PC-9 (cell line): ENCODE measurements at regions of chr9 and their contacts with region 1.

Region 1: GRCh38 chr9:115353681-115354080 is 235.7 kb upstream of the TNC start:
- DNase-seq: no peak
- H3K4me3 ChIP-seq: no peak overlapping the region
- H3K27ac ChIP-seq: no peak overlapping the region
- H3K4me1 ChIP-seq: peaks cover 15% of the 10 kb centered on the region
- H3K27me3 ChIP-seq: no peaks in the 10 kb centered on the region
- CTCF ChIP-seq: no peak

Region 2: GRCh38 chr9:116635908-116636307 is 1282.2 kb after region 1 on chr9:
- CTCF ChIA-PET with region 1: no interaction called
- POLR2A ChIA-PET with region 1: interaction called, 10 read pairs
- intact Hi-C with region 1: no loop called
- DNase-seq: no peak
- H3K4me3 ChIP-seq: no peak overlapping the region
- H3K27ac ChIP-seq: no peak overlapping the region
- H3K4me1 ChIP-seq: no peaks in the 10 kb centered on the region
- H3K27me3 ChIP-seq: no peaks in the 10 kb centered on the region
- CTCF ChIP-seq: no peak